H1 (cell line): ENCODE measurements at regions of chr11 and their contacts with region 1.

Region 1: DNA sequence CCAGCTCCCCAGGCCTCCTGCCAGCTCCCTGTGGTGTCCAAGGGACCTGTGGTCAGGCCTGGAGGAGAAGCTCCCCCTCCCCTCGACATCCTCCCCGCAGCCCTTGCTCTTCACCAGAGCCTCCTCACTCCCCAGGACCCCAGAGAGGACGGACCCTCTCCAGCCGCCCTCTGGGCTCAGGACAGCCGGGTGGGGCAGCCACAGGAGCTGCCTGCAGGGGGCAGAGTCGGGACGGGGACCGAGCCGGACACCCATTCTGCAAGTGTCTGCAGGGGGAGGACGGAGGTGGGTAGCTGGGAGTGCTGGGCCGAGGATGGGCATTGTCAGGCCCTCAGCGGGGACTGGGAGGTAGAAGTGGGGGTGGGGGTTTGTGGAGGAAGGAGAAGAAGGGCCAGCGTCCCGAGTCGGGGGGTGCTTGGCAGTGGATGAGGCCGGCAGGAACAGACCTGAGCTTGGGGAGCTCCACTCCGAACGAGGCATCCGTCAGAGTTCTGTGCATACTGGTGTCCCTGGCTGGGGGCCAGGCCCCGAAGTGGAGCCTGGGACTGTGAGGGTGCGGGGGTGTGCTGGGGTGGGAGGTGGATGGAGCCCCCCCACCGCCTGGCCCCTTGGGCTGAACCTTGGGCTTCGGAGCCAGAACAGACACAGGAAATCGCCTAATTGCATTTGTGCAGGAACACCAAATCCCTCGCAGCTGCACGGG is 15.2 kb downstream of the PRR33 start:
- DNase-seq: peak; percentile 25 to 84
- H3K4me3 ChIP-seq: no peak overlapping the region
- H3K27ac ChIP-seq: no peak overlapping the region
- H3K4me1 ChIP-seq: no peaks in the 10 kb centered on the region; a peak in 1 of 7 replicates
- H3K27me3 ChIP-seq: no peaks in the 10 kb centered on the region
- CTCF ChIP-seq: peak; percentile 73 to 78 (median 75)
- EP300 ChIP-seq: no peak
- POLR2A ChIP-seq: no peak
- RAD21 ChIP-seq: peak; percentile 48 to 63; a peak in 3 of 4 replicates

Region 2: GRCh38 chr11:1852877-1853276 is 23.6 kb before region 1 on chr11 and contains the start of gene LSP1:
- CTCF ChIA-PET with region 1: interaction called, 21 read pairs
- POLR2A ChIA-PET with region 1: interaction called, 4 read pairs
- DNase-seq: no peak
- H3K4me3 ChIP-seq: no peak within 1 kb of the TSS
- H3K27ac ChIP-seq: no peak within 1 kb of the TSS
- H3K4me1 ChIP-seq: no peaks in the 10 kb centered on the region
- H3K27me3 ChIP-seq: no peaks in the 10 kb centered on the region
- CTCF ChIP-seq: no peak
- EP300 ChIP-seq: no peak
- POLR2A ChIP-seq: no peak
- RAD21 ChIP-seq: no peak
- total RNA-seq, gene LSP1: not detected in 2 replicates

Region 3: DNA sequence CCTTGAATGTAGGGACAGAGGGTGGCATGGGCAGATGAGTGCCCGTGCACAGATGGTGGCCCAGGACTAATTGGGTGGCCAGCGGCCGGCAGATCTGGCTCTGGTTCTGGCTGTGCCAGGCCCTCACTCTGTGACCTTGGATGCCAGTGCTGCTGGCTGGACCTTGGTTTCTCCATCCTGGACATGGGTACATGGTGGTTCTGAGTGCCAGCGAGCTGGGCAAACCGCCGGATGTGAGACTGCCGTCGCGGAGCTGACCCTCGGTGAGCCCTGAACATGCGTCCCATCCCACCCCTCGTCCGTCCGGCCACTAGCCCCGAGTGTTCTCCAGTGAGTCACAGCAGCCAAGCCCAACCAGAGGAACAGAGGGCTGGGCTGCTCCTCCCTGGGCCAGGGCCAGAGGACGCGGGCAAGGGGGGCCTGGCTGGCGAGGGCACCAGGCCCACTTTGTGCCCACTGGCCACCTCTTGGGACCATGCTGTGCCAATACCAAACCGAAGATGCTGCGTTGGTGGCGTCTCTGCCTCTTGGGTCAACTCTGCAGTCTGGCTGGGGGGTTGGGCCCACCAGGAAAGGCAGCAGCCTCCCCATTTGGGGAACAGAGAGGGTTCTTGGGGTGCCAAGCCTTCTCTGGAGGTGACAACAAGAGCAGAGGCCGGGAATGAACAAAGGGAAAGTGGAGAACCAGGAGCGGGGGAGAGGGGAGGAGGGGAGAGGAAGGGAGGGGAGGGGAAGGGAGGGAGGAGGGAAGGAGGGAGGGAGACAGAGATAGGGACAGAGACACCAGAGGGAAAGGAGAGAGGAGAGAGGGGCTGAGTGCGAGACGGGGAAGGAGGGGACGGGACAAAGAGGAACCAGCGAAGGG is 12.9 kb before region 1 on chr11:
- CTCF ChIA-PET with region 1: interaction called, 17 read pairs
- POLR2A ChIA-PET with region 1: no interaction called
- DNase-seq: no peak
- H3K4me3 ChIP-seq: no peak overlapping the region
- H3K27ac ChIP-seq: no peak overlapping the region
- H3K4me1 ChIP-seq: peaks cover 0 to 16% (median 5%) of the 10 kb centered on the region in 4 experiments; a peak in 5 of 7 replicates
- H3K27me3 ChIP-seq: no peaks in the 10 kb centered on the region
- CTCF ChIP-seq: no peak
- EP300 ChIP-seq: no peak
- POLR2A ChIP-seq: no peak
- RAD21 ChIP-seq: no peak

Region 4: GRCh38 chr11:1899090-1899489 is 22.6 kb after region 1 on chr11:
- CTCF ChIA-PET with region 1: no interaction called
- POLR2A ChIA-PET with region 1: no interaction called
- DNase-seq: no peak
- H3K4me3 ChIP-seq: no peak overlapping the region
- H3K27ac ChIP-seq: no peak overlapping the region
- H3K4me1 ChIP-seq: no peaks in the 10 kb centered on the region
- H3K27me3 ChIP-seq: no peaks in the 10 kb centered on the region; a peak in 1 of 7 replicates
- CTCF ChIP-seq: no peak
- EP300 ChIP-seq: no peak
- POLR2A ChIP-seq: no peak
- RAD21 ChIP-seq: no peak

Region 5: DNA sequence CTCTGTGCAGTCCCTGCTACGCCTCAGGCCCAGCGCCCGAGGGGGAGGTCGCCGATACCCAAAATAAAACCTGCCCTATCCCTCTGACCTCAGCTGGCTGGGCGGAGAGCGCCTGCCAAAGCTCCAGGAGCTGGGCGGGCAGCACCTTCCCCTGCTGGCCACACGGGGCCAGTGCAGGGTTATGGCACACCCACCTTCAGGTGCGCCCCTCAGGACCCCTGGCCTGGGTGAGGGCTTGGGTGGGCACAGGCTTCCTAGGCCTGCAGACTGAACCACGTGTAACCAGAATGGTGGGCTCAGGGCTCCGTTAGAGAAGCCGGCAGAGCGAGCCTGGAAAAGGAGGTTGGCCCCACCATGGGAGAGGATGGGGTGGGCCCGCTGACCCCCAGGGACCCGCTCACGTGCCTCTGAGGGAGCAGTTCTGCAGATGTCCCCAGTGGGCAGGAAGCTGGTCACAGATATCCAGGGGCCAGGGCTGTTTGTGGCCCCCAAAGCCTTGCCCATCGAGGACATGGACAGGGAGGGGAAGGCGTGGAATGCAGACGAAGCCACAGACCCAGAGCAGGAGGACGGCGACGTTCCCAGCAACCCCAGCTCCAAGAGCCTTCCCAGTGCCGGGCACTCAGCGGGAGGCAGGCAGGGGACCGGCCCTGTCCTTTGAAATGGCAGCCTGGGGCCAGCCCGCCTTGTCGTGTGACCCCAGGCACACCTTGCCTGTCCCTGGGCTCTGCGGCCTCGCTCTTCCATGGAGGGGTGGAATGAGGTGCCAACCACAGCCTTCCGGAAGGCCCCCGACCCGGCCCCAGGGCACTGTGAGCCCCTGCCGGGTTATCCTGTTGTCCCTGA is 41.4 kb after region 1 on chr11:
- CTCF ChIA-PET with region 1: interaction called, 24 read pairs
- POLR2A ChIA-PET with region 1: no interaction called
- DNase-seq: no peak
- H3K4me3 ChIP-seq: no peak overlapping the region
- H3K27ac ChIP-seq: no peak overlapping the region
- H3K4me1 ChIP-seq: peaks cover 0 to 3% (median 3%) of the 10 kb centered on the region in 4 experiments; a peak in 4 of 7 replicates
- H3K27me3 ChIP-seq: no peaks in the 10 kb centered on the region
- CTCF ChIP-seq: peak; percentile 74 to 80 (median 77)
- EP300 ChIP-seq: no peak
- POLR2A ChIP-seq: no peak
- RAD21 ChIP-seq: peak; percentile 52 to 68

Region 6: GRCh38 chr11:1946812-1947484 is 70.4 kb after region 1 on chr11 and contains the start of gene MRPL23:
- CTCF ChIA-PET with region 1: interaction called, 33 read pairs
- POLR2A ChIA-PET with region 1: no interaction called
- DNase-seq: no peak
- H3K4me3 ChIP-seq: no peak within 1 kb of the TSS
- H3K27ac ChIP-seq: no peak within 1 kb of the TSS
- H3K4me1 ChIP-seq: peaks cover 0 to 7% (median 0%) of the 10 kb centered on the region in 4 experiments; a peak in 2 of 7 replicates
- H3K27me3 ChIP-seq: no peaks in the 10 kb centered on the region
- CTCF ChIP-seq: no peak
- EP300 ChIP-seq: no peak
- POLR2A ChIP-seq: no peak
- RAD21 ChIP-seq: no peak
- total RNA-seq, gene MRPL23: 86.0 and 86.4 TPM in 2 replicates

Region 7: GRCh38 chr11:1989953-1990352 is 113.4 kb after region 1 on chr11:
- CTCF ChIA-PET with region 1: no interaction called
- POLR2A ChIA-PET with region 1: no interaction called
- DNase-seq: no peak
- H3K4me3 ChIP-seq: no peak overlapping the region
- H3K27ac ChIP-seq: no peak overlapping the region
- H3K4me1 ChIP-seq: no peaks in the 10 kb centered on the region
- H3K27me3 ChIP-seq: no peaks in the 10 kb centered on the region
- CTCF ChIP-seq: no peak
- EP300 ChIP-seq: no peak
- POLR2A ChIP-seq: no peak
- RAD21 ChIP-seq: no peak